A549 (cell line): ENCODE measurements at regions of chr3 and their contacts with region 1.

Region 1: GRCh38 chr3:156059950-156060501 is 60.4 kb upstream of the KCNAB1 start:
- DNase-seq: no peak
- ATAC-seq: peak in 1 of 2 experiments; percentile 35; a peak in 2 of 6 replicates
- H3K4me3 ChIP-seq: no peak overlapping the region
- H3K27ac ChIP-seq: no peak overlapping the region
- H3K4me1 ChIP-seq: no peaks in the 10 kb centered on the region
- CTCF ChIP-seq: no peak
- EP300 ChIP-seq: no peak
- POLR2A ChIP-seq: no peak
- RAD21 ChIP-seq: no peak

Region 2: GRCh38 chr3:156037356-156037755 is 22.7 kb before region 1 on chr3:
- CTCF ChIA-PET with region 1: interaction called, 11 read pairs
- POLR2A ChIA-PET with region 1: no interaction called
- DNase-seq: no peak
- ATAC-seq: no peak
- H3K4me3 ChIP-seq: no peak overlapping the region
- H3K27ac ChIP-seq: no peak overlapping the region
- H3K4me1 ChIP-seq: no peaks in the 10 kb centered on the region
- CTCF ChIP-seq: no peak
- EP300 ChIP-seq: no peak
- POLR2A ChIP-seq: no peak
- RAD21 ChIP-seq: no peak

Region 3: DNA sequence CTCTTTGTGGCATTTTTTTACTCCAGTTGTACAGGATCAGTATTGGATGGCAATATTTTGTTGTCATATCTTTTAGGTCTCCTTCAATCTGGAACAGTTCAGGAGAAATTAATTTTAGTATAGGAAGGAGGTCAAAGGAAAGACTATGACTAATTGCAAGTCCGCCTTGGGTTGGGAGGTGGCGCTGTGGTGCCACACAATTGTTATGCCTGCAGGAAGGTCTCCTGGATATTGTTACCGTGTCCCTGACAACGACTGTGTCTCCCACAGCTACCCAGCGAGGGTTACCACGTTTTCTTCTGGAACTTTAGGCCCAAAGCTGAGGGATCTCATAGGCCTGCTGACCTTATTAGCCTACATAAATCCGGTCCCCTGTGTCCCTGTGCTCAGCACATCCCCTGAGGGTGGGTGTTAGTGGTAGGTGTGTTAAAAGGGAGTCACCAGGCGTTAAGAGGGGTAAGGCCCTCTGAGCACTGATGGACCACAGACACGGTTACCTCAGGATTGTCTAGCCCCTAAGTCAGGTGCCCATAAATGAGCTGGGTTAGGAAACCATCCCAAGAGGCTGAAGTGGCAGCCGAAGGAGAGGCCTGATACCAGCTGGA is 91.9 kb after region 1 on chr3:
- CTCF ChIA-PET with region 1: no interaction called
- POLR2A ChIA-PET with region 1: no interaction called
- DNase-seq: peak; percentile 29 to 74
- ATAC-seq: peak; percentile 79 to 91; a peak in 5 of 6 replicates
- H3K4me3 ChIP-seq: no peak overlapping the region
- H3K27ac ChIP-seq: no peak overlapping the region
- H3K4me1 ChIP-seq: no peaks in the 10 kb centered on the region
- CTCF ChIP-seq: peak; percentile 70
- EP300 ChIP-seq: no peak
- POLR2A ChIP-seq: no peak
- RAD21 ChIP-seq: peak; percentile 73 to 84

Region 4: DNA sequence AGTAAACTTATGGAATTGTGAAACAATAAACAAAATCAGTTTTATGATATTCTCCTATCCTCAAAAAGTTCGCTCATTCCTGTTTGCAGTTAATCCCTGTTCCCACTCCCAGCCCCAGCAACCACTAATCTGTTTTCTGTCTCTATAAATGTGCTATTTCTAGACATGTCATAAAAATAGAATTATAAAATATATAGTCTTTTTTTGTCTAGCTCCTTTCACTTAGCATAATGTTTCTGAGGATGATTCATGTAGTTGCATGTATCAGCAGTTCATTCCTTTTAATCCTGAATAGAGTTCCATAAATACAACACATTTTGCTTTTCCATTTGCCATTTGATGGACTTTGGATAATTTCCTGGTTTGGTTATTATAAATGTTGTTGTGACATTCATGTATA is 200.3 kb after region 1 on chr3:
- CTCF ChIA-PET with region 1: no interaction called
- POLR2A ChIA-PET with region 1: no interaction called
- DNase-seq: no peak
- ATAC-seq: no peak
- H3K4me3 ChIP-seq: no peak overlapping the region
- H3K27ac ChIP-seq: no peak overlapping the region
- H3K4me1 ChIP-seq: no peaks in the 10 kb centered on the region
- CTCF ChIP-seq: no peak
- EP300 ChIP-seq: no peak
- POLR2A ChIP-seq: no peak
- RAD21 ChIP-seq: no peak